ENCODE measurements at regions of chr3 and their contacts with region 1.

Region 1: DNA sequence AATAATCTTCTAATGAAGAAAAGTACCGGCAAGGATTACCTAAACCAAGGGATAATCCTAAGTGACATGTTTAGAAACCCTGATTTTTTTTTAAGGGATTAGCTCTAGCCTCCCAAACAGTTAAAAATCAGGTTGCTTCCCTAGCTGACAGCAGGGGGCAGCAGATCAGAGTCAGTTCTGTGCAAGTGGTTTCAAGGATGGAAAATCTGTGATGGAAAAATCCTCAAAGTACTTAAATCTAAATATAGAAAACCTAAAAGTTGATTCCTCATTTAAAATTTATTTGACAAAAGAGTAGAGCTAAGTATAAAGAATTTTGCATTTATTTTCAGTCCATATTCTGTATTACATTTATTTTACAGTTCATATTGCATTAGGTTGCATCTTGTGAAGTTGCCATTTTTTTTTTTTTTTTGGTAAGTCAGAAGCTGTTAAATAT is 107.6 kb downstream of the PEX5L start:
- DNase-seq: peak; percentile 40
- ATAC-seq: no peak
- H3K4me3 ChIP-seq: no peak overlapping the region
- H3K4me3 Mint-ChIP-seq: no peak overlapping the region
- H3K27ac ChIP-seq: no peak overlapping the region
- H3K27ac Mint-ChIP-seq: no peak overlapping the region
- H3K4me1 ChIP-seq: no peaks in the 10 kb centered on the region
- H3K4me1 Mint-ChIP-seq: no peaks in the 10 kb centered on the region
- H3K27me3 ChIP-seq: peaks cover 0 to under 1% (median 0%) of the 10 kb centered on the region in 4 experiments
- H3K27me3 Mint-ChIP-seq: peaks cover 26% of the 10 kb centered on the region
- CTCF ChIP-seq: peak; percentile 78

Region 2: DNA sequence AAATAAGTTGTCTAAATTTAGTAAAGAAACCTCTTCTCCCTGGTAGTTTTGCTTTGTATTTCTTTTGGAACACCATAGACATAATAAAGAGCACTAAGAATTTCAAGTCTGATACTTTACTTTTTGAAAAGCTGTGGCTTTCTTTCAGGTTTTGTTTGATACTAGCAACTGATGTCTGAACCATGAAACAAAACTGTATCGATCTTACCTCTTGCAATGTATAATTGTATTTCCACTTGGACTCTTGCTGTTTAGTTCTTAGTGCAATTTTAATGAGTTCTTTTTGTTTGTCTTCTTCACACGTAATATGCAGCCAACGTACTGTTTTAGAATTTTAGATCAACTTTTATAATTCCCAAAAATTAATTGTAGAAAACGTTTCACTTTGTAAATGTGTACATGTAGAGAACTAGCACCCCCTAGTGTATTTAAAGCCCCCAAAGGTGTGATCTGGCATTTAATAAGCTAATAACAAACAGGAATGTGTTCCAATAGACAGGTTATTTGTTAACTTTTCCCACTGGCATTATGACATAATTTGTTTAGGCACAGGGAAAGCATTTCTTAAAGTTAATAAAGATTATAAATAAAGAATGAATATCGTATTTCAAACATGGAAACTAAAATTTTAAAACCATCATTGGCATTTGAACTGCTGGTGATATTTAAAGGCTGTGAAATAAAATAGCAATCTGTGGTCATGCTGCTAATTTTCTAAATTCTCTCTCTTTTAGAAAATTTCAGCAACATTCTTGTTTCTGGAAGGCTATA is 1349.5 kb after region 1 on chr3:
- CTCF ChIA-PET with region 1: interaction called, 14 read pairs
- POLR2A ChIA-PET with region 1: no interaction called
- intact Hi-C with region 1: no loop called
- DNase-seq: peak; percentile 6
- ATAC-seq: no peak
- H3K4me3 ChIP-seq: no peak overlapping the region
- H3K4me3 Mint-ChIP-seq: no peak overlapping the region
- H3K27ac ChIP-seq: no peak overlapping the region
- H3K27ac Mint-ChIP-seq: no peak overlapping the region
- H3K4me1 ChIP-seq: no peaks in the 10 kb centered on the region
- H3K4me1 Mint-ChIP-seq: no peaks in the 10 kb centered on the region
- H3K27me3 ChIP-seq: no peaks in the 10 kb centered on the region
- H3K27me3 Mint-ChIP-seq: peaks cover 5% of the 10 kb centered on the region
- CTCF ChIP-seq: peak; percentile 54

Measured in B cell (primary cell).